ENCODE measurements at regions of chr12 and their contacts with region 1.

Region 1: GRCh38 chr12:116406516-116406915 is 129.0 kb upstream of the MED13L start:
- DNase-seq: peak; percentile 98 to 99
- ATAC-seq: peak; percentile 94 to 99
- H3K4me3 ChIP-seq: no peak overlapping the region
- H3K27ac ChIP-seq: peak overlapping the region; percentile 62 to 73 (median 68)
- H3K4me1 ChIP-seq: peaks cover 17 to 24% of the 10 kb centered on the region in 2 donors
- H3K27me3 ChIP-seq: no peaks in the 10 kb centered on the region
- CTCF ChIP-seq: peak in 2 of 5 experiments; percentile 37 to 39
- POLR2A ChIP-seq: peak in 1 of 2 donors; percentile 30

Region 2: GRCh38 chr12:115227137-115227615 is 1179.3 kb before region 1 on chr12:
- in situ Hi-C with region 1: no loop called
- intact Hi-C with region 1: loop called (anchors 2 kb)
- DNase-seq: peak; percentile 87 to 97
- ATAC-seq: peak; percentile 94 to 96
- H3K4me3 ChIP-seq: no peak overlapping the region
- H3K27ac ChIP-seq: peak overlapping the region; percentile 83 to 92 (median 84)
- H3K4me1 ChIP-seq: peaks cover 14 to 36% of the 10 kb centered on the region in 2 donors
- H3K27me3 ChIP-seq: no peaks in the 10 kb centered on the region
- CTCF ChIP-seq: no peak
- POLR2A ChIP-seq: no peak

Region 3: DNA sequence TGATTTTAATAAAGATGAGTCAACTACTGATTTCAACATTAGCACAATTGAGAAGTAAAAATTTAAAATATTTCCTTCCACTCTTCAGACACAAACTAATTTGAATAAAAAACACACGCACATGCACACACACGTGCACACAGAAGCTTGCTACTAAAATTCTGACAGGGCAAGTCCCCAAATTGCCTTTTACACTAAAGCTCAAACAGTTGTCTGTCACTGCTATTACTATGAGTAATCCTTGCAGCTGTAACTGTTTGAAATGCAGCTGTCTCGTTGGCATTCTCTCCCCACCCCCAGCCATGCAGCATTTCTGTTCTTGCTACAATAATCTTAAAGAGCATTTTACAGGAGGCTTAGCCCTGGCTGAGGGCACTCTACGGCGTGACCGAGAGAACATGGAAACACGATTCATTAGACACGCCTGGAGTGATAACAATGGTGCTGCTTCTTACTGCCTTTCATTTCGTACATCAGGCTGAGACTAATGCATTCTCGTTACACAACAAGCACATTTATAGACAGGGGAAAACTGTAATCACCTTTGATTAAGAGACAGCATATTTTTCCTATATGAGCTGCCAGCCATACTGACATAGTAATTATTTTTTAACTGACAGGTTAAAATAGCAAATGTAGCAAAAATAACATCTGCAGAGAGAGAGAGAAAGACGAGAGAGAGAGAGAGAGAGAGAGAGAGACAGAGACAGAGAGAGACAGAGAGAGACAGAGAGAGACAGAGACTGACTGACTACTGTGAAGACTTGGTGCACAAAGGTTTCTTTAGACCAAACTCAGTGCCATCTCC is 282.9 kb before region 1 on chr12:
- in situ Hi-C with region 1: no loop called
- intact Hi-C with region 1: loop called (anchors 10 kb)
- DNase-seq: peak; percentile 67 to 75
- ATAC-seq: peak; percentile 84 to 87
- H3K4me3 ChIP-seq: peak overlapping the region in 3 of 4 donors; percentile 24 to 36 (median 31)
- H3K27ac ChIP-seq: peak overlapping the region; percentile 1 to 77 (median 73)
- H3K4me1 ChIP-seq: peaks cover 89 to 93% of the 10 kb centered on the region in 2 donors
- H3K27me3 ChIP-seq: no peaks in the 10 kb centered on the region
- CTCF ChIP-seq: no peak
- POLR2A ChIP-seq: no peak

Region 4: DNA sequence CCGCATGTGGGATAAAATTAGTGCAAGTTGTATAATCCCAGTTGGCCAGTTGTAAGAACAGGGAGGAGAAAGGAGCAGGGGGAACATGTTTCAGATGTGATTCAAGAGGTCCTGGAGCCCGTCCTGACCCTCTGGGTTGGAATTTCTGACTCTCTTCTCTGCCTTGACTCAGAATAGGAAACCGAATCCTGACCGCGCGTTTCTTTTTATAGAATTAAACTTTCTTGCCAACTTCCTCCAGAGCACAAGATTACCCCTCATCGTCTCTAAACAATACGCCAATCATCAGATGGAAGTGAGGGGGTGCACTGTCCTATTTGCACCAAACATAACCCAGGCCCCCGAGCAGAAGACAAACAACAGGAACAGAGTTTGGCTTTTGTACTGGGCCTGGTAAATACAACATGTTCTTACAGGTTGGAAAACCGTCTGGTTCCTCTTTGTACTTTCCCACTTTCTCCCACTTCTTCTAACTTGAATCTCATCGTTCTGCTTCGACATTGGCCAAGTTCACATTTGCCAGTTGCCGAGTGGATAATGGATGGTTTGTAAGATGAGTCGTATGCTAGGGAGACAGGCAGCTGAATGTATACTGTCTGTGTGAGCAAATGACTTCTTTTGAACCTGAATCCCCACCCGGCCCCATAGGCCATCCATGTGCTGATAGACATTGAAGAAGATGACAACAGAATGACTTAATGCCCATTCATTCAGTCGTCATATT is 86.5 kb before region 1 on chr12:
- in situ Hi-C with region 1: no loop called
- intact Hi-C with region 1: loop called (anchors 1 kb)
- DNase-seq: peak; percentile 84 to 93
- ATAC-seq: peak; percentile 93 to 95
- H3K4me3 ChIP-seq: peak overlapping the region; percentile 21 to 44 (median 34)
- H3K27ac ChIP-seq: peak overlapping the region; percentile 78 to 92 (median 84)
- H3K4me1 ChIP-seq: peaks cover 28 to 32% of the 10 kb centered on the region in 2 donors
- H3K27me3 ChIP-seq: no peaks in the 10 kb centered on the region
- CTCF ChIP-seq: no peak
- POLR2A ChIP-seq: no peak

Region 5: DNA sequence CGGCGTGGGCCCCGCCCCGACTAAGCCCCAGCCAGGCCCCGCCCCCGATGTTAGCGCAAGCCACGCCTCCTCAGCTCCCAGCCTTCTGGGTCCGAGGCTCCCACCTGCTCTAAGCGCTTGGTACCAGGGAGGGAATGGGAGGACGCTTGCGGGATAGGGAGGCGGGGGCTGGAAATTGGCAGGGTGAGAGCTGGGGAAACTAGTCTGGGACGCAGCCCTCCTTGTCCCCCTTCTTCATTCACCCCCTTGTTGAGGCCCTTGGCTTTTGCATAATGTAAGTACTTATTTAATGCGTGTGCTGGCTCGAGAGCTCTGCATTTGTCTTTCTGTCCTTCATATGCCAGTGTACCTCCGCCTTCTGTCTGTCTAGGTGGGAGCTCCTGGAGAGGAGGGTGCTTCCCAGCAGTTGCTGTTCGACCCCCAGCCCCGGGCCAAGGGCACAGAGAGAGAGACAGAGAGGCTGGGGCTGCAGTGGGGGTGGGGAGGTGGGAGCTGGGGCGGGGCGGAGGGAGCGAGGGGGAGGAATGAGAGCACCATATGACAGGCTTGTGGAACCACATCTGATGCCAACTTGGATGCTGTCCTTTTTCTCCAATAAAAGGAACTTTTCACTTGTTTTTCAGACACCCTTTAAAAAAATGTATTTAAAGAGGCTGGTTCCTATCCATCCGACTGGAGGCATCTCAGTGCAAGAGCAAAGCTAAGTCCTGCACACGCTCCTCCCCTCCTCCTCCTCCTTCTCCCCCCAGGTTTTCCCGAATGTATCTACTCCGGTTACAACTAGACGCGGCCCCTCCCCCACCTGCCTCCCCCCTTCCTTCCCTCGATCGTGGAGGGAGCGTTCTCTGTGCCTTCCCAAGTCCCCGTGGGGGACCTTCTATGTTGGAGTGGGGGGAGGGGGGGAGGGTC is 127.1 kb after region 1 on chr12:
- in situ Hi-C with region 1: no loop called
- intact Hi-C with region 1: loop called (anchors 5 kb)
- DNase-seq: peak; percentile 31 to 58
- ATAC-seq: peak; percentile 77 to 80
- H3K4me3 ChIP-seq: peak overlapping the region; percentile 50 to 88 (median 74)
- H3K27ac ChIP-seq: peak overlapping the region; percentile 75 to 81 (median 80)
- H3K4me1 ChIP-seq: peaks cover 5 to 11% of the 10 kb centered on the region in 2 donors
- H3K27me3 ChIP-seq: no peaks in the 10 kb centered on the region
- CTCF ChIP-seq: no peak
- POLR2A ChIP-seq: peak in 1 of 2 donors; percentile 36

Measured in gastrocnemius medialis (tissue), 4 donors.